ENCODE measurements at regions of chr12 and their contacts with region 1.

Region 1: GRCh38 chr12:109899783-109900751 is at the start of gene TCHP:
- DNase-seq: peak; percentile 87
- ATAC-seq: peak; percentile 93
- H3K4me3 ChIP-seq: peak within 1 kb of the TSS; percentile 64
- H3K27ac ChIP-seq: peak within 1 kb of the TSS; percentile 79
- H3K4me1 ChIP-seq: peaks cover 3% of the 10 kb centered on the region; the same call in 1 of the 2 replicates
- H3K27me3 ChIP-seq: no peaks in the 10 kb centered on the region
- CTCF ChIP-seq: peak; percentile 51
- POLR2A ChIP-seq: no peak
- RAD21 ChIP-seq: peak; percentile 50; the same call in 1 of the 2 replicates
- total RNA-seq, gene TCHP: 6.1 and 11.4 TPM in 2 replicates

Region 2: DNA sequence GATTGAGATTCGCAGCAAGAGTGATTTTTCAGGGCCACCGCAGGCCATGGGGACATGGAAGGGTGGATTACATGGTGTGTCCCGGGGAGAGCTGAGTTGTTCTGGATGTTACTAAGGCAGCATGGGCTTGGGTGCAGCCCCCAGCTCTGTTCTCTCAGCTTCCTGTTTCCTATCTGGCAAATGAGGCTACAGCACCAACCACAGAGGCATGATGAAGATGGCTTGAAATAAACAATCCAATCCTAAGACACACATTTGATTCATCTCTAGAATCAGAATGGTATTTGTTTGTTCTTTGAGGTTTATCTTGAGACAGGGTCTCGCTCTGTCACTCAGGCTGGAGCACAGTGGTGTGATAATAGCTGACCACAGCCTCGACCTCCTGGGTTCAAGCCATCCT is 41.3 kb before region 1 on chr12:
- CTCF ChIA-PET with region 1: no interaction called
- POLR2A ChIA-PET with region 1: no interaction called
- dilution Hi-C with region 1: no loop called
- in situ Hi-C with region 1: no loop called
- intact Hi-C with region 1: loop called (anchors 1 kb)
- DNase-seq: peak; percentile 28
- ATAC-seq: peak; percentile 59
- H3K4me3 ChIP-seq: no peak overlapping the region
- H3K27ac ChIP-seq: no peak overlapping the region
- H3K4me1 ChIP-seq: peaks cover 3% of the 10 kb centered on the region
- H3K27me3 ChIP-seq: no peaks in the 10 kb centered on the region
- CTCF ChIP-seq: no peak
- POLR2A ChIP-seq: no peak
- RAD21 ChIP-seq: no peak

Measured in IMR-90 (cell line).